Activated B cell treated with CpG ODN at 0.5 μM for 24 hours (primary cell): ENCODE measurements at regions of chr9 and their contacts with region 1.

Region 1: DNA sequence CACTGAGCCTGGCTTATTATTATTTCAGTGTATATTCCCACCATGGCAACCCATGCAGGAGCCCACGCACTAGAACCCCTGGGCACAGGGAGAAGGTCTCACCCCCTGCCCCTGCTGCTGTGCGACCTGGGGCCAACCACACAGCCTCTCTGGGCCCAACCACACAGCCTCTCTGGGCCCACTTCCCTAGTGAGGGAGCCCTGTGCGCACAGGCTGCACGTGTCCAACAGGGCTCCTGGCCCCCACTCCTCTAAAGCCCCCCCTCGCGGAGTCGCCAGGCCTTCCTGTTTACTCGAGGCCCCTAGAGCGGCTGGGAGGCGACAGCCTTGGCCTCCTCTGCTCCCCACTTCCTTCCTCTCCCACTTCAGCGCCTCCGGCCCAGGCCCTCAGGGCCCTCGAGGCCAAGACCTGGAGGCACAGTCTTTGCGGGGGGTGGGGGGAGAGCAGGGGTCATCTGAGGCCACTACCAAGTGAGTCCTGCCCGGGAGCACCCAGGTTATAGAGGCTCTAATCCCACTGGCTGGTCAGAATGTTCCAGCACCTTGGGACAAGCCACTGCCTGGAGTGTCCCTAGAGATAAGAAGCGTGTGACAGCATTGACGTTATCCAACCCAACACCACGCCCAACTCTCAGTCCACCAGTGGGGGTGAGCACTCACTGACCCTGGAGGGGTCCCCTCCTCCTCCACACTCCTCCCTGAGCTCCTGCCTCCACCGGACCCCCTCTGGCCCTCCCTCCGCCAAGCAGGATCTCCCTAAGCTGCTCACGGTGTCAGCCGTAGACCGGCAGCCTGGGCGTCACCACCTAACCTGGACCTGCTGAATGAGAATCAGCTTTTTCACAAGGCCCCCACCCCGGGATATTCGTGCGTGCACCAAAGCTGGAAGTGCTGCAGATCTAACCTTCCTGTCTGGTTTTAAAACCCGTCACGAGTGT is 7.9 kb upstream of the ENG start:
- DNase-seq: peak; percentile 48
- ATAC-seq: peak; percentile 60
- H3K4me3 Mint-ChIP-seq: peak overlapping the region; percentile 41
- H3K27ac Mint-ChIP-seq: peak overlapping the region; percentile 93
- H3K4me1 Mint-ChIP-seq: peaks cover 65% of the 10 kb centered on the region
- H3K27me3 Mint-ChIP-seq: no peaks in the 10 kb centered on the region
- CTCF ChIP-seq: no peak

Region 2: GRCh38 chr9:127606043-127606442 is 256.3 kb before region 1 on chr9:
- CTCF ChIA-PET with region 1: no interaction called
- POLR2A ChIA-PET with region 1: interaction called, 14 read pairs
- intact Hi-C with region 1: no loop called
- DNase-seq: no peak
- ATAC-seq: no peak
- H3K4me3 Mint-ChIP-seq: no peak overlapping the region
- H3K27ac Mint-ChIP-seq: no peak overlapping the region
- H3K4me1 Mint-ChIP-seq: peaks cover 10% of the 10 kb centered on the region
- H3K27me3 Mint-ChIP-seq: peaks cover 30% of the 10 kb centered on the region
- CTCF ChIP-seq: no peak

Region 3: DNA sequence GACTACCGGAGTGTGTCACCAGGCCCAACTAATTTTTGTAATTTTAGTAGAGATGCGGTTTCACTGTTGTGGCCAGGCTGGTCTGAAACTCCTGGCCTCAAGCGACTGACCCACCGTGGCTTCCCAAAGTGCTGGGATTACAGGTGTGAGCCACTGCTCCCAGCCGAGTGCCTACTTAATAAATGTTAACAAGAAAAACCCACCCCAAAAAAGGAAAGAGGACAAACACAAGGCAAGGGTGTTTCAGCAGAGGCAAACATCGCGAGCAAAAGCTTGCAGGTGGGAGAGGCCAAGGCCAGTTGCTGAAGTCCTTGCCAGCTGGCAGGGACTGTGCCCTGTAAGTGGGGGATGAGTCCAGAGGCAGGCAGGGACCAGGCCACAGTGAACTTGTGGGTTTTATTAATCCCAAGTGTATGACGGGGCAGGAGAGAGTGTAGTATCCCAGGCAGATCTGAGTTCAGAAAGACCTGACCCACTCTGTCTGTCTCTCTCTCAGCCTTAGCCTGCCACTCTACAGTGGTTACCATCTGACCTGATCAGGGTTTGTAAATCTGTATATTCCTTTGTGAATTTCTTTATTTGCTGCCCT is 66.0 kb before region 1 on chr9:
- CTCF ChIA-PET with region 1: no interaction called
- POLR2A ChIA-PET with region 1: no interaction called
- intact Hi-C with region 1: no loop called
- DNase-seq: no peak
- ATAC-seq: peak; percentile 45
- H3K4me3 Mint-ChIP-seq: peak overlapping the region; percentile 64
- H3K27ac Mint-ChIP-seq: peak overlapping the region; percentile 75
- H3K4me1 Mint-ChIP-seq: peaks cover 32% of the 10 kb centered on the region
- H3K27me3 Mint-ChIP-seq: no peaks in the 10 kb centered on the region
- CTCF ChIP-seq: no peak